Gastrocnemius medialis (tissue), 4 donors: ENCODE measurements at regions of chr5 and their contacts with region 1.

Region 1: DNA sequence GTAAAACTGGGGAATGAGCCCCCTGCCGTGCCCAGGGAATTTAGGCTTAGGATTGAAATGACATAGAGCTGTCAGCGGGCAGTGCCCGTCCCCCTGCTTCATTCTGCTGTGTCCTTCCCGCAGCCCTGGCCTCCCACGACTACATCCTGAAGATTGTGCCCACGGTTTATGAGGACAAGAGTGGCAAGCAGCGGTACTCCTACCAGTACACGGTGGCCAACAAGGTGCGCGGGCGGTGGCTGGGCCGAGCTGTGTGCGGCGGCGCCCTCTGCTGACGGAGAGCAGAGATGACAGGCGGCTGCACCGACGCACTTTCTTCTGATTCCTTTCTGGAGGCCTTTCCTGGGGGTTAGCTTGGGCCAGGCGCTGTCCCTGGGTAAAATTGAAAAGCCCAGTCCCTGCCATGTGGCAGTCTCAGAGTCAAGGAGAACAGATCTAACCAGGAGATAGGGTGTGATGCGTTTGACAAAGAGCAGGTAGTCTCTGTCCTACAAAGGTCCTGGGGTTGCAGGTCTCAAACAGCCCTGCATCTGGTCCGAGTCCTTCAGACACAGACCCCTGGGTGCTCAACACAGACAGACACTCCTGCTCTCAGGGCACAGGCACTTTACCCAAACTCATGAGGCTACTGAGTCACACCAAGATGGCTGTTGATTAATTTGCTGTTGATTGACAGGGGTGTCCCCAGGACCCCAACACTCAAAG is 26.8 kb upstream of the RPL26L1 start:
- DNase-seq: peak; percentile 60 to 66
- ATAC-seq: peak; percentile 73 to 92
- H3K4me3 ChIP-seq: no peak overlapping the region
- H3K27ac ChIP-seq: peak overlapping the region in 3 of 4 donors; percentile 2 to 67 (median 65)
- H3K4me1 ChIP-seq: peaks cover 10 to 12% of the 10 kb centered on the region in 2 donors
- H3K27me3 ChIP-seq: no peaks in the 10 kb centered on the region
- CTCF ChIP-seq: peak; percentile 94 to 99 (median 98)
- POLR2A ChIP-seq: no peak

Region 2: DNA sequence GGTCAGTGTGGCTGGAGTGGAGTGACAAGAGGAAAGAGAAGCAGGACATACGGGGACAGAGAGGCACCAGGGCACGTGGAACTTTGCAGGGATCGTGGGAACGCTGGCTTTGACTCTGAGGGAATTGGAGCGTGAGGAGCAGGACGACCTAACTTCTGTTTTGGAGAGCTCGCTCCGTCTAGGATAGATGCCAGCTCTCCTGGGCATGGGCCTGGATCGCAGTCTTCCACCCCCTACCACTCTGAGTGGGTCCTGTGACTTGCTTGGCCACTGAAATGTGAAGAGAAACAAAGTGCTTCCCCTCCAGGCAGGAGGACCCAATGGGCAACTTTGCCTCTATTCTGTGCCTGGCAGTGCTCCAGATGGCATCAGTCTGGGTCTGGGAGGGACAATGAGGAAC is 469.4 kb before region 1 on chr5:
- in situ Hi-C with region 1: loop called in 2 of 4 experiments (anchors 25 kb)
- intact Hi-C with region 1: loop called (anchors 10 kb)
- DNase-seq: no peak
- ATAC-seq: no peak
- H3K4me3 ChIP-seq: no peak overlapping the region
- H3K27ac ChIP-seq: no peak overlapping the region
- H3K4me1 ChIP-seq: no peaks in the 10 kb centered on the region
- H3K27me3 ChIP-seq: no peaks in the 10 kb centered on the region
- CTCF ChIP-seq: no peak
- POLR2A ChIP-seq: no peak

Region 3: DNA sequence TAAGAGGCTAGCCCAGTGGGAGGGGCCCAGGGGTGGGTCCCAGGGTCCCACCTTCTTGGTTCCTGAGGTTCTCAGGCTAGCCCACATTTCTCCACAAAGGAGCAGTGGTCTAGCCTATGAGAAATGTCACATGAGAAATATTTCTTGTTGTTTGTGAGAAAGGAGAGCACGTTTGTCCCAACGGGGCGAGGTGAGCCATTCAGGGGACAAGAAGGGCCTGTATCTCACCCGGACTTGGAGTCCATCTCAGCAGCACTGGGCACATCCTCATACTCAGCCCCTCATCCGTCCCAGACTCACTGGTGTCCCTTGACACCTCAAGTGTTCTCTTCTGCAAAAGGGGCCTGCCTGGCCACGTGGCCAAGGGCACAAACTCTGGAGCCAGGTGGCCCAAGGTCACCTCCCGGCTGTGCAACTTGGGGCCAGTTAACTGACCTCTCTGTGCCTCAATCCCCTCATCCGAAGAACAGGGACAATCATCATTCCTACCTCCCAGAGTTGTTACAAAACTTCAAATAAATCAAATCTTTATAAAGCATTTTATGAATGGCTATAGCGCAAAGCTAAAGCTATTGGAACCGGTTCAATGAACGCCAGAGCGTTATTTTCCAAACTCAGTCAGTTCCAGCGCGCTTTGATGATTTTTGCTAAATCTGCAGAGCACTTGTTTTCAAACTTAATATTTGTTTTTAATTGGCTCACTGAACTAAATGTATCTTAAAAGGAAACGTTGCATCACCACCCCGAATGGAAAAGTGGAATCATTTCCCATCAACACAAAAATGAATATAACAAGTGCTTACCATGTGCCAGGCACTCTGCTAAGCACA is 210.9 kb before region 1 on chr5:
- in situ Hi-C with region 1: loop called in 2 of 4 experiments (anchors 5 kb)
- intact Hi-C with region 1: no loop called
- DNase-seq: no peak
- ATAC-seq: peak; percentile 33 to 56
- H3K4me3 ChIP-seq: no peak overlapping the region
- H3K27ac ChIP-seq: peak overlapping the region in 3 of 4 donors; percentile 29 to 60 (median 59)
- H3K4me1 ChIP-seq: peaks cover 10 to 12% of the 10 kb centered on the region in 2 donors
- H3K27me3 ChIP-seq: no peaks in the 10 kb centered on the region
- CTCF ChIP-seq: no peak
- POLR2A ChIP-seq: no peak

Region 4: GRCh38 chr5:172770675-172771438 is 161.6 kb before region 1 on chr5 and contains the start of gene DUSP1:
- in situ Hi-C with region 1: no loop called
- intact Hi-C with region 1: no loop called
- DNase-seq: peak; percentile 99
- ATAC-seq: peak; percentile 34 to 42
- H3K4me3 ChIP-seq: peak within 1 kb of the TSS; percentile 66 to 98 (median 83)
- H3K27ac ChIP-seq: peak within 1 kb of the TSS; percentile 96 to 99 (median 96)
- H3K4me1 ChIP-seq: peaks cover 39 to 42% of the 10 kb centered on the region in 2 donors
- H3K27me3 ChIP-seq: no peaks in the 10 kb centered on the region
- CTCF ChIP-seq: peak; percentile 32 to 77 (median 40)
- POLR2A ChIP-seq: peak in 1 of 2 donors; percentile 100
- total RNA-seq, gene DUSP1: 345 to 1,004 (median 793) TPM